Activated T-helper 1 cell treated with anti-CD3 and anti-CD28 coated beads, Interleukin-12 subunit alpha, Interleukin-12 subunit beta, Interleukin-2, Interleukin-4 antibody, amounts not matched to agents 30 ng/mL and 10 ng/mL and 1 ng/mL, durations not matched to agents 14 hours and 24 hours and 36 hours (primary cell): ENCODE measurements at regions of chr19 and their contacts with region 1.

Region 1: GRCh38 chr19:55146078-55146704 is 2.8 kb downstream of the TNNT1 start:
- DNase-seq: no peak
- H3K4me3 Mint-ChIP-seq: no peak overlapping the region
- H3K27ac Mint-ChIP-seq: no peak overlapping the region
- H3K4me1 Mint-ChIP-seq: no peaks in the 10 kb centered on the region
- H3K27me3 Mint-ChIP-seq: peaks cover 38% of the 10 kb centered on the region

Region 2: GRCh38 chr19:54662730-54663129 is 483.5 kb before region 1 on chr19 and contains the start of gene LILRB4:
- intact Hi-C with region 1: loop called (anchors 10 kb)
- DNase-seq: no peak
- H3K4me3 Mint-ChIP-seq: no peak within 1 kb of the TSS
- H3K27ac Mint-ChIP-seq: no peak within 1 kb of the TSS
- H3K4me1 Mint-ChIP-seq: no peaks in the 10 kb centered on the region
- H3K27me3 Mint-ChIP-seq: peaks cover under 1% of the 10 kb centered on the region
- total RNA-seq, gene LILRB4: 0.34 TPM in 1 of 2 replicates, not detected in the other

Region 3: GRCh38 chr19:55160128-55160985 is 14.2 kb after region 1 on chr19:
- intact Hi-C with region 1: loop called (anchors 1 kb)
- DNase-seq: peak; percentile 86
- H3K4me3 Mint-ChIP-seq: no peak overlapping the region
- H3K27ac Mint-ChIP-seq: no peak overlapping the region
- H3K4me1 Mint-ChIP-seq: no peaks in the 10 kb centered on the region
- H3K27me3 Mint-ChIP-seq: peaks cover 46% of the 10 kb centered on the region

Region 4: DNA sequence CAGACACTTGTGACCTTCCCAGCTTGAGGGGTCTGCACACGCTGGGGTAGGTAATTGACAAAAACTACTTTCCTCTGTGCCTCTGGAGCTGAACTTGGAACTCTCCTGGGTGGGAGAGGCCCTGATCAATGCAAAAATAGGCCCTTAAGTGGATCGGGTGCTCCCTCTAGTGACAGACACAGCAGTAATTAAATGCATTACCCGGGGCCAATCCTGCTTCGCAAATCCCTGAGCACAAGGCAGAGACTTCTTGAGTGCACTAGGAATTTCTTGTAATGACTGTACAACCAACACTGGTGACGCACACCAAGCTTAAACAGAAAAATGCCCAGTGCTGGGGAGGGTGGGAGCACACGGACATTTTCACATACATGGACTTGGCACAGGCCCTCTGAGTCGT is 272.0 kb after region 1 on chr19:
- intact Hi-C with region 1: loop called (anchors 1 kb)
- DNase-seq: peak; percentile 37
- H3K4me3 Mint-ChIP-seq: no peak overlapping the region
- H3K27ac Mint-ChIP-seq: no peak overlapping the region
- H3K4me1 Mint-ChIP-seq: peaks cover 8% of the 10 kb centered on the region
- H3K27me3 Mint-ChIP-seq: peaks cover 13% of the 10 kb centered on the region

Region 5: GRCh38 chr19:55454787-55455243 is 308.6 kb after region 1 on chr19:
- intact Hi-C with region 1: loop called (anchors 1 kb)
- DNase-seq: peak; percentile 29
- H3K4me3 Mint-ChIP-seq: no peak overlapping the region
- H3K27ac Mint-ChIP-seq: peak overlapping the region; percentile 74
- H3K4me1 Mint-ChIP-seq: no peaks in the 10 kb centered on the region
- H3K27me3 Mint-ChIP-seq: peaks cover 27% of the 10 kb centered on the region

Region 6: GRCh38 chr19:55503502-55504251 is 357.5 kb after region 1 on chr19:
- intact Hi-C with region 1: loop called (anchors 1 kb)
- DNase-seq: peak; percentile 89
- H3K4me3 Mint-ChIP-seq: peak overlapping the region; percentile 78
- H3K27ac Mint-ChIP-seq: peak overlapping the region; percentile 82
- H3K4me1 Mint-ChIP-seq: peaks cover 24% of the 10 kb centered on the region
- H3K27me3 Mint-ChIP-seq: peaks cover 4% of the 10 kb centered on the region